ENCODE measurements at regions of chr12 and their contacts with region 1.

Region 1: GRCh38 chr12:101823891-101824290 is 6.9 kb downstream of the GNPTAB start:
- H3K4me3 ChIP-seq: no peak overlapping the region
- H3K27ac ChIP-seq: no peak overlapping the region
- H3K4me1 ChIP-seq: no peaks in the 10 kb centered on the region
- CTCF ChIP-seq: no peak

Region 2: DNA sequence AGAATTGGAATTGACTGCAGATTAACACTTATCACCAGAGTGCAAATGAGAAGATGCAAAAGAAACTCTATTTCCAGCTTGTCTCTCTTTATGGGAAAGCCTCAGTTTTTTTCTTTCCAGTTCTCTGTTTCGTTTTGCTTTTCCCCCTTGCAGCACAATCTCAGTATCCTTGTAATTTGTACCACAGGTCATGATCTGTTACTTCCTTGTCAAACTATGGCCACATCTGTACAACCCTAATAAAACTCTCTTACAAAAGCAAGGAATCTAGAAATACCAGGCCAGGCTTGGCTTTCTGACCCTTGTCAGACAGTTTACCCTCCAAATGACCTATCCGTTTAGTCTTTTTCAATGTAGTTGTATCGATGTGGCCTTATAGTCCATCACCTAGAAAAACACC is 195.2 kb before region 1 on chr12:
- CTCF ChIA-PET with region 1: no interaction called
- POLR2A ChIA-PET with region 1: no interaction called
- H3K4me3 ChIP-seq: no peak overlapping the region
- H3K27ac ChIP-seq: no peak overlapping the region
- H3K4me1 ChIP-seq: no peaks in the 10 kb centered on the region
- CTCF ChIP-seq: no peak

Region 3: GRCh38 chr12:101710288-101710687 is 113.6 kb before region 1 on chr12:
- CTCF ChIA-PET with region 1: no interaction called
- POLR2A ChIA-PET with region 1: no interaction called
- H3K4me3 ChIP-seq: no peak overlapping the region
- H3K27ac ChIP-seq: no peak overlapping the region
- H3K4me1 ChIP-seq: peaks cover 23% of the 10 kb centered on the region
- CTCF ChIP-seq: no peak

Region 4: GRCh38 chr12:101749657-101750056 is 74.2 kb before region 1 on chr12:
- CTCF ChIA-PET with region 1: no interaction called
- POLR2A ChIA-PET with region 1: no interaction called
- H3K4me3 ChIP-seq: no peak overlapping the region
- H3K27ac ChIP-seq: no peak overlapping the region
- H3K4me1 ChIP-seq: no peaks in the 10 kb centered on the region
- CTCF ChIP-seq: no peak

Region 5: GRCh38 chr12:101813117-101813516 is 10.8 kb before region 1 on chr12:
- CTCF ChIA-PET with region 1: interaction called, 10 read pairs
- POLR2A ChIA-PET with region 1: no interaction called
- H3K4me3 ChIP-seq: no peak overlapping the region
- H3K27ac ChIP-seq: no peak overlapping the region
- H3K4me1 ChIP-seq: peaks cover 2% of the 10 kb centered on the region; the same call in 1 of the 2 replicates
- CTCF ChIP-seq: no peak

Measured in HEK293 (cell line).